ENCODE measurements at regions of chr6 and their contacts with region 1.

Region 1: GRCh38 chr6:53348371-53349208 is at the start of gene ELOVL5:
- DNase-seq: peak; percentile 90
- H3K4me3 Mint-ChIP-seq: peak within 1 kb of the TSS; percentile 92
- H3K27ac Mint-ChIP-seq: peak within 1 kb of the TSS; percentile 80
- H3K4me1 Mint-ChIP-seq: peaks cover 34% of the 10 kb centered on the region
- H3K27me3 Mint-ChIP-seq: no peaks in the 10 kb centered on the region
- CTCF ChIP-seq: no peak
- total RNA-seq, gene ELOVL5: 56.6 and 58.3 TPM in 2 replicates

Region 2: GRCh38 chr6:53281518-53282215 is 66.9 kb before region 1 on chr6:
- CTCF ChIA-PET with region 1: no interaction called
- POLR2A ChIA-PET with region 1: no interaction called
- intact Hi-C with region 1: no loop called
- DNase-seq: no peak
- H3K4me3 Mint-ChIP-seq: no peak overlapping the region
- H3K27ac Mint-ChIP-seq: no peak overlapping the region
- H3K4me1 Mint-ChIP-seq: no peaks in the 10 kb centered on the region
- H3K27me3 Mint-ChIP-seq: no peaks in the 10 kb centered on the region
- CTCF ChIP-seq: no peak

Region 3: GRCh38 chr6:53294095-53294494 is 54.5 kb before region 1 on chr6:
- CTCF ChIA-PET with region 1: interaction called, 4 read pairs
- POLR2A ChIA-PET with region 1: interaction called, 11 read pairs
- intact Hi-C with region 1: no loop called
- DNase-seq: no peak
- H3K4me3 Mint-ChIP-seq: no peak overlapping the region
- H3K27ac Mint-ChIP-seq: no peak overlapping the region
- H3K4me1 Mint-ChIP-seq: peaks cover 5% of the 10 kb centered on the region
- H3K27me3 Mint-ChIP-seq: no peaks in the 10 kb centered on the region
- CTCF ChIP-seq: peak; percentile 39

Region 4: DNA sequence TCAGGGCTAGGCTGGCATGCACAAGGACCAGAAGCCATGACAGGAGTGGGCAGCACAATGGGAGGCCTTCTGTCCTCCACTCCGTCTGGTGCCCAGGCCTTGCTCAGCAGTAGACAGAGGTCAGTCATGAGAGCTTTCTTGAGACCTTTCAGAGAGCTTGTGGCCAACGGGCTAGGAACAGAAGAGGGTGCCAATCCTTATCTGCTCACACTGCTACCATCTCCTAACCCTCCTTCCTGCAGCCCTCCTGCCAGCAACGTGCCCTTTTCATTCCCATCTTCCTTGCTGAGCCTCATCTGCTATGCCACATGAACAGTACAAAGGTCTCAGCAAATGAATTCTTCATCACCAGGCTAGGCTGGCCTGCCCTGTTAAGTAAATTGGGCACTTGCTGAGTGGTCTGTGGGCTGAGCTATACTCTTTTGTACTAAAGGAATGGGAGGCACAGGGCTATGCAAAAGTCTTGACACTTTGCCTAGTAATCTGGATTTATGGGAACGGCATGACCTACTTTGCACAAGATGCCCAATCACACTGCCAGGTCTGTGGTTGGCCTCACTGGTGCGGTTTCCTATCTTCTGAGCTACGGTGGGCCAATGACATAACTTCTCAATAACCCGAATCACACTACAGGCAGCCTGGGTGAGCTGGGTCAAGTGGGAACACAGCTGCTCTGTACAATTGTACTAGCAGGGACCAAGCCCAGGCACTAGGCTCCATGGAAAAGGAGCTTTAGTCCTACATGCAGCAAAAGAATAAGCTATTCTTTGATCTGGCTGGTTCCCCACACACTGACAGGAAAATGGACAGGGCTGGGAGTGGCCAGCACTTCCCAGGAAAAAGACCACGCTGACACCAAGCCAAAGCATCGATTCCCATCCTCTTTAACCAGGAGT is 47.7 kb before region 1 on chr6:
- CTCF ChIA-PET with region 1: interaction called, 7 read pairs
- POLR2A ChIA-PET with region 1: interaction called, 13 read pairs
- intact Hi-C with region 1: loop called (anchors 1 kb)
- DNase-seq: no peak
- H3K4me3 Mint-ChIP-seq: no peak overlapping the region
- H3K27ac Mint-ChIP-seq: peak overlapping the region; percentile 89
- H3K4me1 Mint-ChIP-seq: peaks cover 34% of the 10 kb centered on the region
- H3K27me3 Mint-ChIP-seq: no peaks in the 10 kb centered on the region
- CTCF ChIP-seq: no peak

Region 5: DNA sequence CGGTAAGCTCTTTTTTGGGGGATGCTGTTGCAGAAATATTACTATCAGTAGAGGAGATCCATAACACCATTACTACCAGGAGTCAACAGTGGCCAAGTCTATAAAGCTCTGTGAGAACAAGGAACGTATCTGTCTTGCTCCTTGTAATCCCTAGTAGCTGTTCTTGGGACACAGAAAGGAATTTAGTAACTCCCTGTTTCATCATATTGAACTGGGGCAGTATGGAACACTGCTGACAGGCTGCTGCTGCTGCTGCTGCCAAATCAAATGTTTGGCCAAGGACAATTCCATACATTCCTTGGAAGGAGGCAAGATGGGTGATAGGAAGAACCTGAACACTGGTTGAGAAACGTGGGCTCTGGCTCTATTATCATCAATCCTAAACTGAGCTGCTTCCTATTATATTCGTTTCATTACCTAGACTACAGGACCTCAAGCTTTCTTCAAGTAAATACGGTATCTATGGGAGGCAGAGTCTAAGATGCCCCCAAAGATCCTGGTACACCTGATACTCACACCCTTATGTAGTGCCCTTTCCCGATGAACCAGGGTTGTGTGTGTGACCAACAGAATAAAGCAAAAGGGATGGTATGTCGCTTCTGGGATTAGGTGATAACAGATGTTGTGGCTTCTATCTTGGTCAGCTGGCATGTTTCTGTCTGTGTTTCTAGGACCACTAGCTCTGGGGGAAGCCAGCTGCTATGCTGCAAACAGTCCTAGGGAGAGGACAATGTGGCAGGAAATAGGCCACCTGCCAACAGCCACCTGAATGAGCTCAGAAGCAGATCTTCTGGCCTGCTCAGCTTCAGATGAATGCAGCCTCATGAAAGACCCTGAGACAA is 39.3 kb before region 1 on chr6:
- CTCF ChIA-PET with region 1: interaction called, 3 read pairs
- POLR2A ChIA-PET with region 1: interaction called, 16 read pairs
- intact Hi-C with region 1: no loop called
- DNase-seq: peak; percentile 77
- H3K4me3 Mint-ChIP-seq: peak overlapping the region; percentile 32
- H3K27ac Mint-ChIP-seq: peak overlapping the region; percentile 64
- H3K4me1 Mint-ChIP-seq: peaks cover 45% of the 10 kb centered on the region
- H3K27me3 Mint-ChIP-seq: no peaks in the 10 kb centered on the region
- CTCF ChIP-seq: no peak

Region 6: GRCh38 chr6:53326372-53327016 is 22.1 kb before region 1 on chr6:
- CTCF ChIA-PET with region 1: interaction called, 6 read pairs
- POLR2A ChIA-PET with region 1: interaction called, 61 read pairs
- intact Hi-C with region 1: loop called (anchors 2 kb)
- DNase-seq: peak; percentile 97
- H3K4me3 Mint-ChIP-seq: peak overlapping the region; percentile 61
- H3K27ac Mint-ChIP-seq: peak overlapping the region; percentile 79
- H3K4me1 Mint-ChIP-seq: peaks cover 60% of the 10 kb centered on the region
- H3K27me3 Mint-ChIP-seq: no peaks in the 10 kb centered on the region
- CTCF ChIP-seq: no peak

Region 7: GRCh38 chr6:53359072-53359842 is 10.7 kb after region 1 on chr6:
- CTCF ChIA-PET with region 1: no interaction called
- POLR2A ChIA-PET with region 1: interaction called, 28 read pairs
- intact Hi-C with region 1: no loop called
- DNase-seq: peak; percentile 95
- H3K4me3 Mint-ChIP-seq: peak overlapping the region; percentile 77
- H3K27ac Mint-ChIP-seq: peak overlapping the region; percentile 91
- H3K4me1 Mint-ChIP-seq: peaks cover 37% of the 10 kb centered on the region
- H3K27me3 Mint-ChIP-seq: no peaks in the 10 kb centered on the region
- CTCF ChIP-seq: no peak

Region 8: DNA sequence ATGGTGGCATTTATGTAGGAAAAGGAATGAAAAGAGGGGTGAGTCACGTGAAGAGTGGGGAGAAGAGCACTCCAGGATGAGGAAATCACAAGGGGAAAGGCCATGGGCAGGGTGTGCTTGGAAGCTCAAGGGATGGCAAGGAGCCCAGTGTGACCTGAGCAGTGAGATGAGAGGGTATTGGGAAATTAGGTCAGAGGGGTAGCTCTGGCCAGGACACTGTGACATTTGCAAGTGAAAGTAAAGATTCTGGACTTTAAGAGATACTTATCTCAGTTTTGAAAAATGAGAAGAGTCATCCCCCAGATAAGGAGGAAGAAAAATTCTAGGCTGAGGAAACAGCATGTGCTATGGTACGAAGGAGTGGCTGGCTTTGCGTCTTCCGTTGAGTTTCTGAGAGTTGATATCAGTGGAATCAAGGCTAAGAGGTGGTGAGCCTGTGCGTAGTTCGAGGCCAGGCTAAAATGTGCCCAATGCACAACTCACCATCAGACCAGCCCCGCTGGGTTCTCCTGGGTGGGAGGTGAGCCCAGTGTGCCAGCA is 116.4 kb after region 1 on chr6:
- CTCF ChIA-PET with region 1: no interaction called
- POLR2A ChIA-PET with region 1: interaction called, 19 read pairs
- intact Hi-C with region 1: no loop called
- DNase-seq: peak; percentile 95
- H3K4me3 Mint-ChIP-seq: peak overlapping the region; percentile 6
- H3K27ac Mint-ChIP-seq: peak overlapping the region; percentile 99
- H3K4me1 Mint-ChIP-seq: peaks cover 73% of the 10 kb centered on the region
- H3K27me3 Mint-ChIP-seq: no peaks in the 10 kb centered on the region
- CTCF ChIP-seq: no peak

Measured in MCF 10A (cell line).